ENCODE measurements at regions of chr11 and their contacts with region 1.

Region 1: DNA sequence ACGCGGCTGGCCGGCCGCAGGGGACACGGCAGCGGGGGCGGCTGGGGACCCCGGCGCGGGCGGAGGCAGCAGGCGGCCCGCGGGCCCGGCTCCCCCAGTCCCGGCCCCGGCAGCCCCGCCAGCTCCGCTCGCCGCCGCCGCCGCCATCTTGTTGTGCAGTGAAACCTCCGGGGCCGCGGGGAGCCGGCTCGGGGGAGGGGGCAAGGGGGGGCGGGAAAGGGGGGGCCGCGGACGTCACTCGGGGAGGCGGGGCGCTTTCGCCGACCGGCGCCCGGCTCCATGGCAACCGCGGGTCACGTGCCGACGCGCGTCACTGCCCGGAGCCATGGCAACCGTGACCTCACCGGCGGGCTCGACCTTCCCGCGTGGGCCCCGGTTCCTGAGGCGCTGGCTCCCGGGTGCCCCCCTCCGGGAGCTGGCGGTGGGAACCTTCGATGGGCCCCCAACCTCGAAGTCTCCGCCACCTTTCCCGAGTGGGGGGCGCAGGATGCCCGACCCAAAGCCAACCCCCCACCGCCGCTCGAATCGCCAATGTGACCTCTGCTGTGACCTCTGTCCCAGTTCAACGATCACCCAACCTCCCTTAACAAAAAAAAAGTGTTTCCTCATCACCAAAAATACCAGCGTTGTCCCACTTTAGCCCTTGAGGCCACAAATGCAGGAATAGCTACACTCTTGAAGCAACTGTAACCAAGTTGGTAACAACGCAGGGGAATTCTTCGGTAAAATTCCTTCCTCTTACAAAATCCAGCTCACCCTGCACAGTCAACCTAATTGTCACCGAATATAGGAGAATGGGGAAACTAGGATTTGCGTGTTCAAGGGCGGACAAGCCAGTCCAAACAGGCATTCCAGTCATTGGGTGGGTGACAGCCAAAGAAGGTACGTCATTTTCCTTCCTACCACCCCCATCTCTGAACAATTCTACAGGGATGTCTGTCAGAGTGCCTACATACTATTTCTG is at the start of gene SIK3:
- DNase-seq: peak; percentile 65
- ATAC-seq: peak; percentile 66
- H3K4me3 ChIP-seq: peak within 1 kb of the TSS; percentile 79 to 89 (median 87)
- H3K27ac ChIP-seq: peak within 1 kb of the TSS; percentile 80
- H3K4me1 ChIP-seq: peaks cover 53% of the 10 kb centered on the region
- H3K27me3 ChIP-seq: no peaks in the 10 kb centered on the region; a peak in 1 of 5 replicates
- CTCF ChIP-seq: peak; percentile 72
- EP300 ChIP-seq: no peak
- POLR2A ChIP-seq: peak in 1 of 2 experiments; percentile 37; a peak in 1 of 4 replicates
- RAD21 ChIP-seq: peak; percentile 68; the same call in 1 of the 2 replicates
- total RNA-seq, gene SIK3: 9.8 and 11.3 TPM in 2 replicates

Region 2: GRCh38 chr11:116787786-116788486 is 310.6 kb before region 1 on chr11 and contains the start of gene ZPR1:
- CTCF ChIA-PET with region 1: no interaction called
- POLR2A ChIA-PET with region 1: interaction called, 8 read pairs
- in situ Hi-C with region 1: loop called (anchors 10 kb)
- intact Hi-C with region 1: no loop called
- DNase-seq: peak; percentile 37
- ATAC-seq: peak; percentile 55
- H3K4me3 ChIP-seq: peak within 1 kb of the TSS; percentile 79 to 90 (median 86)
- H3K27ac ChIP-seq: peak within 1 kb of the TSS; percentile 61
- H3K4me1 ChIP-seq: peaks cover 58% of the 10 kb centered on the region
- H3K27me3 ChIP-seq: no peaks in the 10 kb centered on the region; a peak in 1 of 5 replicates
- CTCF ChIP-seq: no peak
- EP300 ChIP-seq: no peak
- POLR2A ChIP-seq: peak; percentile 58 to 71; a peak in 3 of 4 replicates
- RAD21 ChIP-seq: no peak
- total RNA-seq, gene ZPR1: 79.3 and 102 TPM in 2 replicates

Region 3: DNA sequence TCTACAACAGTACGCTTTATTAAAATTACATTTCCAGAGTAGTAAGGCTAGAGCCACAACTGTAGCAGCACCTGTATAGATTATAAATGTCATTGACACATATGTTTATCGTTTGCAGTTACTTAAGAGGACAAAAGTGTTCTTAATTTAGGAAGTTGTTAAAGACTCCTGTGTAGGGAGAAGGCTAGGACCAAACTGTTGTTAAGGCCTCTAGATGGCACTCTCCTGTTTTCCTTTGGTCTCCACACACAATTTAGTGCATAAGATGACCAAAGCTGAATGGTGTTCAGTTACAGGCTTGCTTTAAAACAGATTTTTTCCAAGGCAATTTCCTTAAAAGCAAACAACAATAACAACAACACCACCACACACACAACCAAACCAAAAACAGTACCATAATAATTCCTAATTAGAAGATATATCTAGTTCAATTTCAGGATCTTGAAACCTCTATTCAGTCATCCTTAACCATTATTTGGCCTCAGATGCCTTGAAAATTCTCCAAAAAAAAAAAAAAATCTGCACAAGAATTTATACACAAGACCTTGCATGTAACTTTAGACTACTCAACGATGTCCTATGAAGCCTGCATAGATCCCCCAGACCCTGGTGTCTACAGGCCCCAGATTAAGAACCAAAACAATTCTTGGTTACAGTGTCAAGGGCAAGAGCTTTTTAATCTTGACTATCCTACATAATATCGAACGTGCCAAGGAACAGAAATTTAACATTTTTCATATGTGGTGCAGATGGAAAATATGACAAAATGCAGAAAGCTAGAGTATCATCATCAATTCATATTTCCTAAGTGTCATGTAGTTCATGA is 218.5 kb before region 1 on chr11:
- CTCF ChIA-PET with region 1: no interaction called
- POLR2A ChIA-PET with region 1: interaction called, 3 read pairs
- in situ Hi-C with region 1: loop called (anchors 5 kb)
- intact Hi-C with region 1: no loop called
- DNase-seq: peak; percentile 65
- ATAC-seq: peak; percentile 91
- H3K4me3 ChIP-seq: no peak overlapping the region
- H3K27ac ChIP-seq: no peak overlapping the region
- H3K4me1 ChIP-seq: no peaks in the 10 kb centered on the region
- H3K27me3 ChIP-seq: no peaks in the 10 kb centered on the region
- CTCF ChIP-seq: peak; percentile 81
- EP300 ChIP-seq: no peak
- POLR2A ChIP-seq: no peak
- RAD21 ChIP-seq: peak; percentile 67

Region 4: GRCh38 chr11:116986521-116987105 is 111.9 kb before region 1 on chr11:
- CTCF ChIA-PET with region 1: no interaction called
- POLR2A ChIA-PET with region 1: no interaction called
- in situ Hi-C with region 1: no loop called
- intact Hi-C with region 1: no loop called
- DNase-seq: peak; percentile 41
- ATAC-seq: no peak
- H3K4me3 ChIP-seq: no peak overlapping the region
- H3K27ac ChIP-seq: no peak overlapping the region
- H3K4me1 ChIP-seq: peaks cover 67% of the 10 kb centered on the region
- H3K27me3 ChIP-seq: no peaks in the 10 kb centered on the region
- CTCF ChIP-seq: no peak
- EP300 ChIP-seq: peak in 1 of 2 experiments; percentile 21; a peak in 1 of 4 replicates
- POLR2A ChIP-seq: no peak
- RAD21 ChIP-seq: no peak

Region 5: DNA sequence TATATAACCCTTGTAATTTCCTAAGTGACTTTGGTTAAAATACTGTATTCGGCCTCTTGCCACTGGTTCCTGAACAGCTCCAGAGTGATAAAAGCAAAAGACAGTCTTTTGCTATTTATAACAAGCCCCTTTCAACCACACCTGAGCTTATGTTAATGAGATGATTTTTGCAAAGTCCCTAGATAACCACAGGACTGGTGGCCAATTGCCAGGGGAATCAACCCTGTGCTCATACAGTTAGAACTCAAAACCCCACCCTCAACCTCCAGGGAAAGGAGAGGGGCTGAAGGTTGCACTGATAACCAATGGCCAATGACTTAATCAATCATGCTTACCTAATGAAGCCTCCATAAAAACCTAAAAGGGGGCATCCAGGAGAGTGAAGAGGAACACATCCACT is 78.3 kb before region 1 on chr11:
- CTCF ChIA-PET with region 1: no interaction called
- POLR2A ChIA-PET with region 1: interaction called, 4 read pairs
- in situ Hi-C with region 1: no loop called
- intact Hi-C with region 1: loop called (anchors 5 kb)
- DNase-seq: no peak
- ATAC-seq: no peak
- H3K4me3 ChIP-seq: peak overlapping the region in 1 of 3 experiments; percentile 43; a peak in 2 of 6 replicates
- H3K27ac ChIP-seq: peak overlapping the region; percentile 74
- H3K4me1 ChIP-seq: peaks cover 65% of the 10 kb centered on the region
- H3K27me3 ChIP-seq: no peaks in the 10 kb centered on the region
- CTCF ChIP-seq: no peak
- EP300 ChIP-seq: no peak
- POLR2A ChIP-seq: no peak
- RAD21 ChIP-seq: no peak

Region 6: DNA sequence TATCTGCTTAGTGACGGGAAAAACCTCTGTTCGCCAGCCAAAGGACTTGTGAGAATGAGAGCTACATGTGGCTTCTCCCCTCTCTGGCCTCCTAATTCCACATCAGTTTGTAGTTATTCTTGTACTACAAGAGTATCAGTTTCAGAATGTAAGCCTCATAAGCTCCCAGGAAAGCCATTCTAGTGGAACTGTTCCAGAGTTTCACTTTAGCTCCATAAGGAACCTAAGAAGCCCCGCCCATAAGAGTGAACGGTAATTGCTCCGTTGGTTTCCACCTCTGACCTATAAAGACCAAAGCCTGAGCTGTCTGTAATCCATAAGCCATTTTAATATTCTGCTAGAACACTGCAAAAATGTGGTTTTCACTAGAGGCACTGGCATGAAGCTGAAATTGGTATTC is 53.4 kb before region 1 on chr11:
- CTCF ChIA-PET with region 1: no interaction called
- POLR2A ChIA-PET with region 1: no interaction called
- in situ Hi-C with region 1: no loop called
- intact Hi-C with region 1: no loop called
- DNase-seq: no peak
- ATAC-seq: no peak
- H3K4me3 ChIP-seq: no peak overlapping the region
- H3K27ac ChIP-seq: no peak overlapping the region
- H3K4me1 ChIP-seq: peaks cover 20% of the 10 kb centered on the region
- H3K27me3 ChIP-seq: no peaks in the 10 kb centered on the region
- CTCF ChIP-seq: no peak
- EP300 ChIP-seq: no peak
- POLR2A ChIP-seq: no peak
- RAD21 ChIP-seq: no peak

Region 7: DNA sequence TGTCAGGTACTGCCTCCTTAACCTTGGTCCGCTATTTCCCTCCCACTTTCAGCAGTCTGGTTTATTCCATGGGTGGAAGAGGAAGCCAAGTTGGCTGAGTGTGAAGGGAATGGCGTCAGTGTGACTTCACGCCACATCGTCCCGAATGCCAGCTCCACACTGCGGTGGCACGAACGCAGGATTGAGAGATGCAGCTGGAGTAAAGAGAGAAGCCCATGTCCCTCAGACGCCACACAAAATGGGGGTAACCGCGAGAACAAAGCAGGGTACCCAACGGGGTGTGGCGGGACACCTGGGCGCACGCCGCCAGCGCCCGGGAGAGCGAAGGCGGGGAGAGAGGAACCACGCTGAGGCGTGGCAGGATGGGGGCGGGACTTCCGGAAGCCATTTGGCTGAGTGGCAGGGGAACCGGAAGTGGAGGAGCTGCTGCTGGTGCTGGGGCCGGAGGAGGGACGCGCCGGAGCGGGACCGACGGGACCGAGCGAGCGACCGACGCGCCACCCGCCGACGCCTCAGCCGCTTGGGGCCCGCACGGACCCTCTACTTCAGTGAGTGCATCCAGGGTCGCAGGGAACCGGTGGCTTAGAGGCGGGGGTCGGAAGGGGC is 45.4 kb after region 1 on chr11 and contains the start of gene PAFAH1B2:
- CTCF ChIA-PET with region 1: no interaction called
- POLR2A ChIA-PET with region 1: interaction called, 12 read pairs
- in situ Hi-C with region 1: no loop called
- intact Hi-C with region 1: no loop called
- DNase-seq: peak; percentile 88
- ATAC-seq: peak; percentile 96
- H3K4me3 ChIP-seq: peak within 1 kb of the TSS; percentile 86 to 97 (median 94)
- H3K27ac ChIP-seq: peak within 1 kb of the TSS; percentile 62
- H3K4me1 ChIP-seq: peaks cover 29% of the 10 kb centered on the region
- H3K27me3 ChIP-seq: no peaks in the 10 kb centered on the region; a peak in 1 of 5 replicates
- CTCF ChIP-seq: no peak; the same call in 1 of the 2 replicates
- EP300 ChIP-seq: peak in 1 of 2 experiments; percentile 15; a peak in 1 of 4 replicates
- POLR2A ChIP-seq: peak; percentile 56 to 94
- RAD21 ChIP-seq: no peak
- total RNA-seq, gene PAFAH1B2: 104 and 178 TPM in 2 replicates

Region 8: GRCh38 chr11:117273550-117274289 is 175.2 kb after region 1 on chr11:
- CTCF ChIA-PET with region 1: no interaction called
- POLR2A ChIA-PET with region 1: no interaction called
- in situ Hi-C with region 1: no loop called
- intact Hi-C with region 1: no loop called
- DNase-seq: no peak
- ATAC-seq: no peak
- H3K4me3 ChIP-seq: no peak overlapping the region
- H3K27ac ChIP-seq: no peak overlapping the region
- H3K4me1 ChIP-seq: peaks cover 24% of the 10 kb centered on the region
- H3K27me3 ChIP-seq: no peaks in the 10 kb centered on the region
- CTCF ChIP-seq: no peak
- EP300 ChIP-seq: no peak
- POLR2A ChIP-seq: no peak
- RAD21 ChIP-seq: no peak